Activated B cell treated with CpG ODN at 0.5 μM for 24 hours (primary cell): ENCODE measurements at regions of chr4 and their contacts with region 1.

Region 1: DNA sequence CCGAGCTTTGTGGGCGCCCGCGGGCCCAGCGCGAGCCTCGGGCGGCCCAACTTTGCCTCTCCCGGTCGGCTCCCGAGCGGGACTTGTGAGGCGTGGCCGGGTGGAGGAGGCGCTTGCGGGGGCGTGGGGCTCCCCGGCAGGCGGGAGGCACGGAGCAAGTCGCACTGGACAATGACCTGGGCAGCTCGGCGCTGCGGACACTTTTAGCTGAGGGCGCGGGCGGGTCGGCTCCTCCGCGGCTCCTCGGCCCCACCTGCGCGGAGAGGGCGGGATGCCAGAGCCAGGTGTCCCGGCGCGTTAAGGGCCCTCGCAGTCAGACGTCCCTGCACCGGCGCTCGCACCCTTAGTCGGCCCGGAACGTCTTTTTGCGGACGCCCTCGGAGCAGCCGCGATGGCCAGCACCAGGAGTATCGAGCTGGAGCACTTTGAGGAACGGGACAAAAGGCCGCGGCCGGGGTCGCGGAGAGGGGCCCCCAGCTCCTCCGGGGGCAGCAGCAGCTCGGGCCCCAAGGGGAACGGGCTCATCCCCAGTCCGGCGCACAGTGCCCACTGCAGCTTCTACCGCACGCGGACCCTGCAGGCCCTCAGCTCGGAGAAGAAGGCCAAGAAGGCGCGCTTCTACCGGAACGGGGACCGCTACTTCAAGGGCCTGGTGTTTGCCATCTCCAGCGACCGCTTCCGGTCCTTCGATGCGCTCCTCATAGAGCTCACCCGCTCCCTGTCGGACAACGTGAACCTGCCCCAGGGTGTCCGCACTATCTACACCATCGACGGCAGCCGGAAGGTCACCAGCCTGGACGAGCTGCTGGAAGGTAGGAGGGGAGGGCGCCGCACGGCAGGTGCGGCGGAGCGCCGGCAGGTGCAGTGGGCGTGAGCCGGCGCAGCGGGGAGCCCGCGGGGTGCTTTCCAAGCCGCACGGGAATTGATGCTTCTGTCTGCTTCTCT is 664 bp downstream of the DCLK2 start:
- DNase-seq: peak; percentile 50
- ATAC-seq: peak; percentile 63
- H3K4me3 Mint-ChIP-seq: peak overlapping the region; percentile 83
- H3K27ac Mint-ChIP-seq: peak overlapping the region; percentile 37
- H3K4me1 Mint-ChIP-seq: peaks cover 15% of the 10 kb centered on the region
- H3K27me3 Mint-ChIP-seq: peaks cover 28% of the 10 kb centered on the region
- CTCF ChIP-seq: no peak

Region 2: DNA sequence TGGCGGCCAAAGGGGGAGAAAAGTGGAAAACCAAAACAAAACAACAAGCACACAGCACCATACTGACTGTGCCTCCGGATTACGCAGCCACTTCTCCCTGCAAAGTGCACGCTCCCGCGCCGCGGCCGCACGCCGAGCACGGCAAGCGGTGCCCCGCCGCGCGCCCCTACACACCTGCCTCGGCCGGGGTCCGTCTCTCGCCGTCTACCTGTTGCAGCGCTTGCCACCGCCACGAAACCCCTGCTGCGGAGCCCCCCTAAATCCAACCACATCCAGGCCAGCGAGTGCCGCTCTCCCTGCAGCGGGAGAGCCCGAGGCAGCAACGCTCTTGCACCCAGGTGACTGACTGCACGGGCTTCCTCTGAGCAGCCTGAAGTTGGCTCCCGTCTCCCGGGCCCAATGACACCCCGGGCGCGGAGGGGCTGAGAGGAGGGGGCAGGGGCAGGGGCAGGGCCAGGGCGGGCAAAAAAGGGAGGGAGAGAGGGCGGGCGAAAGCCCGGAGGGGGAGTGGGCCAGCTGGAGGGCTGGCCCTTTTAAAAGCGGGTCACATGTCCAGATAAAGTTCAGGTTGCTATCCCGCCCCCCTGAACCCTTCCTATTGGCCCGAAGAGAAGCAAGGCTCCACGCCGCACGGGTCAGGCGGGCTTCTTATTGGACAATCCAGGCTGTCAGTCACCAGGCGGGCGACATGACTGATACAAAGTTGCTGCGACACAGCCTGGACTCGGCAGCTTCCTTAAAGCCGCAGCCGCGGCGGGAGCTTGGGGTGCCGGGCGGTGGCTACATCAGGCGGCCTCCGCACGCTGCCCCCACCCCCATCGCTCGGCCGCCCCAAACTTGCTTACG is 1636.7 kb before region 1 on chr4 and contains the start of gene NR3C2:
- CTCF ChIA-PET with region 1: no interaction called
- POLR2A ChIA-PET with region 1: interaction called, 4 read pairs
- intact Hi-C with region 1: loop called (anchors 5 kb)
- DNase-seq: peak; percentile 81
- ATAC-seq: peak; percentile 83
- H3K4me3 Mint-ChIP-seq: peak within 1 kb of the TSS; percentile 92
- H3K27ac Mint-ChIP-seq: peak within 1 kb of the TSS; percentile 97
- H3K4me1 Mint-ChIP-seq: peaks cover 33% of the 10 kb centered on the region
- H3K27me3 Mint-ChIP-seq: peaks cover 2% of the 10 kb centered on the region
- CTCF ChIP-seq: no peak
- total RNA-seq, gene NR3C2: 3.9 and 4.5 TPM in 2 replicates

Region 3: DNA sequence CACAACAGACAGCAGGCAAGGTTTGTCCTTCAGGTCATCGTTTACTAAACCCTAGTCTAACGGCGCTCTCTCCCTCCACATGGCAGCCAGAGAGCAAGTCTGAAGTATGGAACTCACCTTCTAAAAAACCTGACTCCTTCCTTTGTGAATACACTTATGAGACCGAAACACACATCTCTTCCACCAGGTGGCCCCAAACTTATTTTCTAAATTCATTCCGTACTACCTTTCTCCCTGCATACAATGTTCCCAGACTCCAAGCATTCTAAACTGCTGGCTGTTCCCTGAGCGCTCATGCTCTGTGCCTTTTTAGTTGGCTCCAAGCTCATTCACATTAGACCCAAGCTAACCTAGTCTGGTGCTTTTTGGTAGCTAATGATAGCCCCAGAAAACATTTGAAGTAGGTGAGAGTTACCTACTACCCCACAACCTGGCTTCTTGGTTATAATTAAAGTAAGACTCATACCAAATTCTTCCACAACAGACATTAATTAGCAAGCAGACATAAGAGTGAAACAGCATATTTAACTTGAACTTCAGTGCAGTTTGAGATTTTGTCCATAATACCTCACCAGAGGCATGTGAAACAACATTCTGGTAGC is 68.3 kb before region 1 on chr4:
- CTCF ChIA-PET with region 1: interaction called, 3 read pairs
- POLR2A ChIA-PET with region 1: no interaction called
- intact Hi-C with region 1: loop called (anchors 1 kb)
- DNase-seq: no peak
- ATAC-seq: peak; percentile 37
- H3K4me3 Mint-ChIP-seq: no peak overlapping the region
- H3K27ac Mint-ChIP-seq: no peak overlapping the region
- H3K4me1 Mint-ChIP-seq: no peaks in the 10 kb centered on the region
- H3K27me3 Mint-ChIP-seq: peaks cover 5% of the 10 kb centered on the region
- CTCF ChIP-seq: no peak

Region 4: GRCh38 chr4:150038335-150039076 is 40.4 kb before region 1 on chr4:
- CTCF ChIA-PET with region 1: no interaction called
- POLR2A ChIA-PET with region 1: interaction called, 3 read pairs
- intact Hi-C with region 1: loop called (anchors 1 kb)
- DNase-seq: no peak
- ATAC-seq: peak; percentile 88
- H3K4me3 Mint-ChIP-seq: peak overlapping the region; percentile 22
- H3K27ac Mint-ChIP-seq: peak overlapping the region; percentile 83
- H3K4me1 Mint-ChIP-seq: peaks cover 36% of the 10 kb centered on the region
- H3K27me3 Mint-ChIP-seq: no peaks in the 10 kb centered on the region
- CTCF ChIP-seq: no peak

Region 5: GRCh38 chr4:150098214-150098613 is 19.3 kb after region 1 on chr4:
- CTCF ChIA-PET with region 1: no interaction called
- POLR2A ChIA-PET with region 1: no interaction called
- intact Hi-C with region 1: no loop called
- DNase-seq: no peak
- ATAC-seq: no peak
- H3K4me3 Mint-ChIP-seq: no peak overlapping the region
- H3K27ac Mint-ChIP-seq: no peak overlapping the region
- H3K4me1 Mint-ChIP-seq: no peaks in the 10 kb centered on the region
- H3K27me3 Mint-ChIP-seq: peaks cover 4% of the 10 kb centered on the region
- CTCF ChIP-seq: no peak

Region 6: DNA sequence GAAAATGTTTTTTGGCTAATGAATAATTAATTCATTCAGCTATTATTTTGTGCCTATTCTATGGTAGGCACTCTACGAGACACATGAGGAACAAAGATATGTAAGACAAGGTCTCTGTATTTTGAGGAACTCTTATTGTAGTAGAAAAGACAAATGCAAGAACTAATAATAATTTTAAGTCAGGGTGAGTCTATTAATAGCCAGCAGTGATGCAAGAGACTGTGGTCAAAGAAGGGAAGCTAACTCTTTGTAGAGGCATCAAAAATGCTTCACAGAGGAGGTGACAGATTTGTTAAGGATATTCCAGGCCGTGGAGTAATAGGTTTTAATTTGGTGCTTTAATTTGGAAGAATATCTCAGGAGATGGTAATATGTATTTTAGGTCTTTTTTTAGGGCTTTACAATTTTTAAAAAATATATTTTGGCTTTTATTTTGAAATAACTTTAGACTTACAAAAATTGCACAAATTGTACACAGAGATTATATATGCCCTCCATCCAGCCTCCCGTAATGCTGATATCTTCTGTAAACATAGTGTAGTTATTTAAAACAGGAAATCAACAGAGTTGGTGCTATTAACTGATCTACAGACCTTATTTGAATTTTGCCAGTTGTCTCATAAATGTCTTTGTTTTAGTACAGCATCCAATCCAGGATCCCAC is 47.4 kb after region 1 on chr4:
- CTCF ChIA-PET with region 1: no interaction called
- POLR2A ChIA-PET with region 1: interaction called, 8 read pairs
- intact Hi-C with region 1: loop called (anchors 2 kb)
- DNase-seq: no peak
- ATAC-seq: peak; percentile 40
- H3K4me3 Mint-ChIP-seq: peak overlapping the region; percentile 55
- H3K27ac Mint-ChIP-seq: no peak overlapping the region
- H3K4me1 Mint-ChIP-seq: peaks cover 34% of the 10 kb centered on the region
- H3K27me3 Mint-ChIP-seq: peaks cover 10% of the 10 kb centered on the region
- CTCF ChIP-seq: no peak

Region 7: DNA sequence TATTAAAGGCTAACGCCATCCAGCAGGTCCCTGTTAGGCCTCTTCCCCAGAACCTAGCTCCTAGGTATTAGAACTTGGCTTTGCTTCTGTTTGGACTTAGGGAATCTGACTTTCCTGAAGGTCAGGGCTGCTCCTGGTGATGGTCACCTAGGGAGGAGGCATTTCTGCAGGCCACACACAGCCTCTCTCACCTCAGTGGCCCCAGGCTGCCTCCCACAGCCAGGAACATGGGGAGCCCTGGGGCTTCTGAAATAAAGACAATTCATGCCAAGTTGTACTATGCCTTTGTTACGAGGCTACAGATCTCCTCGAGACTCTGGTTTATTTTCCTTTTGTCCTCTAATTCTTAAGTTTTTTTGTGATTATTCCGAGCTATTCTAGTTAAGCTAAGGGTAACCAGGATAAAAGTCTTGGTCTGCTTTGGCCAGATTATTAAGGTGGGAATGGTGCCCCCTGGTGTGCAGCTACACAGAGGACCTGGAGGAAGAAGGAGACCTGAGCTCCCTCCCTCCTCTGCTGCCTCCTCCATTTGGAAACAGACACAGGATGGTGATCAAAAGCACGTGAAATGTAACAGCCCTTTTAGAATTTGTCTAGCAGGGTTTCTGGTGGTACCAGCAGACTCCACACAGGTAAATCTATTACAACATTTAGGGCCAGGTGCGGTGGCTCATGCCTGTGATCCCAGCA is 130.4 kb after region 1 on chr4:
- CTCF ChIA-PET with region 1: interaction called, 4 read pairs
- POLR2A ChIA-PET with region 1: interaction called, 5 read pairs
- intact Hi-C with region 1: loop called (anchors 1 kb)
- DNase-seq: peak; percentile 25
- ATAC-seq: no peak
- H3K4me3 Mint-ChIP-seq: no peak overlapping the region
- H3K27ac Mint-ChIP-seq: no peak overlapping the region
- H3K4me1 Mint-ChIP-seq: no peaks in the 10 kb centered on the region
- H3K27me3 Mint-ChIP-seq: peaks cover 3% of the 10 kb centered on the region
- CTCF ChIP-seq: no peak

Region 8: DNA sequence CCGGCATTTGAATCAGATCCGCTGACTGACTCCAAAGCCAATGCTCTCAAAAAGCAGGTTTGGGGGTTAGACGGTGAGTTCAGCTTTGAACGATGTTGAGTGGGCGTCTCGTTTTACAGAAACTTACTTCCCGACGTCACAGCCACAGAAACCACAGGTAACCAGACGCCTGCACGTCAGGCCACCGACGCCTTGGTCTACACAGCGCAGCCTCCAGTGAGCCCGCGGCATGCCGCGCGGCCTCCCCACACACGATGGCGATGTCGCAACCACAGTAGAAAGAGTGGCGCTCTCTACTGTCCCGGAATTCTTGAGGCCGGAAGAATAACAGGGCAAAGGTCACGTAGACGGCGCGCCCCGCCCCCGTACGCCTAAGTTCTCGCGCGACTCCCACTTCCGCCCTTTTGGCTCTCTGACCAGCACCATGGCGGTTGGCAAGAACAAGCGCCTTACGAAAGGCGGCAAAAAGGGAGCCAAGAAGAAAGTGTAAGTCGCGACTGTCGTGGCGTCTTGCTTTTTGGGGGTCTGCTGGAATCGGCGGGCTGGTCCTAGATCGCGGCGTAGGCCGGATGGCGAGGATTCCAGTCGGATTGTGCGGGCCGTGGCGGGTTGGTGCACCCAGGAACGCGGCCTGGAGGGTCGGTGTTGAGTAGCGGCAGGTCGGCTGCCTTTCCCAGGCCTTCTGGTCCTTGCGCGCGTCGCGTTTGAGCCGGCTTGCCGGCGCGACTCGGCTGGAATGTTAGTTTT is 1020.5 kb after region 1 on chr4 and contains the start of gene RPS3A:
- CTCF ChIA-PET with region 1: no interaction called
- POLR2A ChIA-PET with region 1: no interaction called
- intact Hi-C with region 1: loop called (anchors 2 kb)
- DNase-seq: peak; percentile 99
- ATAC-seq: peak; percentile 94
- H3K4me3 Mint-ChIP-seq: peak within 1 kb of the TSS; percentile 99
- H3K27ac Mint-ChIP-seq: peak within 1 kb of the TSS; percentile 98
- H3K4me1 Mint-ChIP-seq: peaks cover 40% of the 10 kb centered on the region
- H3K27me3 Mint-ChIP-seq: peaks cover 4% of the 10 kb centered on the region
- CTCF ChIP-seq: peak; percentile 88
- total RNA-seq, gene RPS3A: 3,089 and 3,656 TPM in 2 replicates